Common myeloid progenitor, CD34-positive (primary cell): ENCODE measurements at regions of chr1 and their contacts with region 1.

Region 1: GRCh38 chr1:39653546-39654031 is 14.1 kb upstream of the HEYL start:
- DNase-seq: peak; percentile 73 to 85 (median 80)
- H3K4me3 ChIP-seq: no peak overlapping the region
- H3K27ac ChIP-seq: no peak overlapping the region
- H3K4me1 ChIP-seq: peaks cover 0 to 4% (median 0%) of the 10 kb centered on the region in 4 experiments
- H3K27me3 ChIP-seq: peaks cover 0 to 16% (median 0%) of the 10 kb centered on the region in 5 experiments

Region 2: DNA sequence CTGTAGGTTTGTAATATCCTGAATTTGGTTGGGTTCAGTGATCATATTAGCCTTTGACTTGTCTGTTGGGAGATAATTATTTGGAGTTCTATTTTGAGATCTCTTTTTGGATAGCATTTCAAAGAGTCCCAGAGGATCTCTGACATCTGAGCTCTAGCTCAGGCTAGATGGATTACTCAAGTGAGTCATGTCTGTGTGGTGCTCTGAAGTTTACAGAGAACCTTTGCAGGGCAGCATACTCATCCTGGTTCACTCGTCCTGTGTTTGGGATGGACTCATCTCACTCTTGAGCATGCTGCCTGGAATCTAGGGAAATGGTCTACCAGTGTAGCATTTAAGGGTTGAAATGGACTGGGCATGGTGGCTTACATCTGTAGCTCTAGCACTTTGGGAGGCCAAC is 191.5 kb before region 1 on chr1:
- CTCF ChIA-PET with region 1: no interaction called
- POLR2A ChIA-PET with region 1: no interaction called
- DNase-seq: no peak
- H3K4me3 ChIP-seq: no peak overlapping the region
- H3K27ac ChIP-seq: no peak overlapping the region
- H3K4me1 ChIP-seq: no peaks in the 10 kb centered on the region
- H3K27me3 ChIP-seq: no peaks in the 10 kb centered on the region

Region 3: DNA sequence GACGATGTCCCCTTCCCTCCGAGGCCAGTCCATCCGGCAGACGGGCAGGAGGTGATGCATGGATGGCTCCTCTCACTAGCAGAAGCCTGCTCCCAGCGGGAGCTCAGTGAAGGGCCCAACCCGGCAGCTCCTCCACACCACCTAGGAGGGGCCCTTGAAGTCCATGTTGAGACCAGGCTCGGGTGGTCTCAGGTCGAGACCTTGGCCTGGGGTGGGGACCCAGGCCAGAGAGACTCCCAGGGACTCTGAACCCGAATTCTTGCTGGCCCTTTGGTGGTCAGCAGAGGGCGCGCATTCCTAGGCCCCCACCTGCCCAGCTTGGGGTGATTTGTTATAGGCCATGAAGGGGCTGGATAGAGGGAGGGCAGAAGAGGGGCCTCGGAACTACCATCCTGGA is 19.0 kb after region 1 on chr1:
- CTCF ChIA-PET with region 1: interaction called, 159 read pairs
- POLR2A ChIA-PET with region 1: no interaction called
- DNase-seq: peak in 2 of 3 donors; percentile 13 to 26
- H3K4me3 ChIP-seq: peak overlapping the region in 3 of 7 experiments; percentile 58 to 70 (median 59)
- H3K27ac ChIP-seq: no peak overlapping the region
- H3K4me1 ChIP-seq: peaks cover 0 to 16% (median 12%) of the 10 kb centered on the region in 4 experiments
- H3K27me3 ChIP-seq: peaks cover 15 to 57% (median 44%) of the 10 kb centered on the region in 5 experiments

Region 4: DNA sequence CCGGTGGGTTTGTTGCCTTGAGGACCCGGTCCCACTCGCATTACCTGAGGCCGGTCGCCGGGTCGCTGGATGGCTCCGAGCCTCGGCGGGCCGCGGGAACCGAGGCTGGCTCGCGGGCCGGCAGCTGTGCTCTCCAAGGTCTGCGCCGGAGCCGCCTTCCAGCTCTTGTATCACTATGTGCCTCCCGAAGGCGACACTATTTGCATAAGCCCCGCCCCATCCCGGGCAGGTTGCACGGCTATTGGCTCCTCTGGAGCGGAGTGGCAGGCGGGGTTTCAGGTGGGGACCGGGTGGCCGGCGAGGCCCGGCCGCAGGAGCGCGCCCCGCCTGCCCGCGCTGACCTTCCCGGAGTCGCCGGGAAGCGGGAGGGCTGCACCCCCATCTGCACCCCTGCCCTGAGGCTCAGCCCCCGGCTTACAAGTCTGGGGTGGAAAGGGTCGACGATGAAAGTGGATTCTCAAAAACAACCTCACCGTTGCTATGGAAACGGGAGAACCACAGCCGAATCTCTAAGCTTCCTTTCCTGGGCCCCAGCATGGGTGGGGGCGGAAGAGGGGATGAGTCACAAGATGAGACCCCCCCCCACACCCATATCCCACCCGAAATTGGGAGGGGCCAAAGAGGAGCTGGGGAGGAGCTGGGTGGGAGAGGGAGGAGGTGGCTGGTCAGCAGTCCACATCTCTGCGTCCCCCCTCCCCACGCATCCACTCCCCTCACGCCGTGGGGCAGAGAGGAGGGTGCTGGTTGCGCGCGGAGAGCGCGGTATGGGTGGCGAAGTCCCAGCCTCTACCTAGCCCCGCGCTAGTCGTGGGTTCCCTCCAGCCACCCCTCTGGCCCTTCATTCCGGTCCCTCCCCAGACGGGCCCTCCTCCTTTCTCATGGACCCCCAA is 37.9 kb after region 1 on chr1 and contains the start of gene HPCAL4:
- CTCF ChIA-PET with region 1: interaction called, 11 read pairs
- POLR2A ChIA-PET with region 1: no interaction called
- DNase-seq: peak; percentile 80 to 91 (median 90)
- H3K4me3 ChIP-seq: peak within 1 kb of the TSS in 5 of 7 experiments; percentile 10 to 67 (median 50)
- H3K27ac ChIP-seq: no peak within 1 kb of the TSS
- H3K4me1 ChIP-seq: peaks cover 0 to 21% (median 13%) of the 10 kb centered on the region in 4 experiments
- H3K27me3 ChIP-seq: peaks cover 8 to 98% (median 43%) of the 10 kb centered on the region in 5 experiments

Region 5: DNA sequence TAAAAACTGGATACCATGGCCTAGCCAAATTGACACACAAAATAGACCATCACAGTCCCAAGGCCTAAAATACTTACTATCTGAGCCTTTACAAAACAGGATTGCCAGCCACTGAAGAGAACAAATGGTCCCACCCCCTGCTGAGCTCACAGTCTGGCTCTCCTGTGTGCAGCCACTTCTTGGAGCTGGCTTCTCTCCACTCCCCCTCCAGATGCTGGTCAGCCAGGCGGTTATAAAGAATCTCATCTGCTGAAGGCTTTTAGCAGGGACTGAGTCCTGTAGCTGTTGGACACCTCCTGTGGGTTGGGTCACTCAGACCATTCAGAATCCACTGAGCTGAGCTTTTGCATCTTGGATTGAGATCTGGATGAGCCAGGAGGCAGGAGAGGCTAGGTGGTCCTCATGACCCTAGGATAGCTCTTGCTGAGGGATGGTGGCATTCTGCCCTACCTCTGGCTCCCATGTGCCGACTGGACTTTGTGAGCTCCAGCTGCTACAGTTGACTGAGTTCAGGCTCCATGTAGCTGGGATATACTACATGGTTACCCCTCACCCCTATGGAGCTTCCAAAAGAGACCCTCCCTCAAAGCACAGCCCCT is 101.4 kb after region 1 on chr1:
- CTCF ChIA-PET with region 1: no interaction called
- POLR2A ChIA-PET with region 1: no interaction called
- DNase-seq: no peak
- H3K4me3 ChIP-seq: no peak overlapping the region
- H3K27ac ChIP-seq: no peak overlapping the region
- H3K4me1 ChIP-seq: peaks cover 0 to 23% (median 9%) of the 10 kb centered on the region in 4 experiments
- H3K27me3 ChIP-seq: no peaks in the 10 kb centered on the region